ENCODE measurements at regions of chr19 and their contacts with region 1.

Region 1: DNA sequence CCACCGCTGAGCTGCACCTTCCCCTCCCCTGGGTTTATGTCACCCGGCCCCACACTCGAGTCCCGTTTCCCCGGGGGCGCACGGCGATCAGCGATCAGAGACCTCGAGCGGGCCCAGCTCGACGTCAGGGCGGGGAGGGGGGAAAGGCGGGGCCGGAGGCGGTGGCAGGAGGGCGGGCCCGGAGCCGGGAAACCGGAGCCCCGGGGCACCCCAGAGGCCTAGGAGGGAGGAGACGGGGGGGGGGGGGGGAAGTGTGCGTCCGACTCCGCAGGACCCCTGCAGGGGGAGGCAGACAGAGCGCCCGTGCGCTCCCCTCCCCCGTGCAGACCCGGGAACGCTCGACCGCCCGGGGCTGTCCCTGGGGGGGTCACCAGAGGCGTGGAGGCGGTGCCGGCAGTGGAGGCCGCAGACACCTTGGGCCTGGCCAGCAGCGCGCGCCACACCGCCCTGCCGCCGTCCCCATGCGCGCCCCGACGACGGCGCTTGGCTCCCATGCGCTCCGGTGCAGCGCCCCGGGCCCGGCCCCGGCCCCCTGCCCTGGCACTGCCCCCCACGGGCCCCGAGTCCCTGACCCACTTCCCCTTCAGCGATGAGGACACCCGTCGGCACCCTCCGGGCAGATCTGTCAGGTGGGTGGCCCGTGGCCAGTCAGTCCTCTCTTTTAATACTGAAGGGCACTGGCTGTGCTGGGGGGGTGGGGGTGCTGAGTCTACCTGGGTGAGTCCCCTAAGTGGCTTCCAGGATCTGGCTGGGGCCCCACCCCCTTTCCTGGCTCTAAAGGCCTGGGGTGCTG is 11.8 kb downstream of the PDE4A start:
- DNase-seq: peak in 1 of 2 experiments; percentile 63
- H3K4me3 ChIP-seq: peak overlapping the region in 2 of 4 experiments; percentile 29 to 54; a peak in 5 of 8 replicates
- H3K27ac ChIP-seq: no peak overlapping the region
- H3K4me1 ChIP-seq: peaks cover 0 to 9% (median 6%) of the 10 kb centered on the region in 4 experiments; a peak in 6 of 7 replicates
- H3K27me3 ChIP-seq: peaks cover 33 to 63% (median 52%) of the 10 kb centered on the region in 4 experiments
- CTCF ChIP-seq: no peak
- EP300 ChIP-seq: no peak
- POLR2A ChIP-seq: no peak
- RAD21 ChIP-seq: no peak

Region 2: GRCh38 chr19:10346509-10346908 is 85.6 kb before region 1 on chr19:
- CTCF ChIA-PET with region 1: no interaction called
- POLR2A ChIA-PET with region 1: no interaction called
- DNase-seq: no peak
- H3K4me3 ChIP-seq: no peak overlapping the region
- H3K27ac ChIP-seq: no peak overlapping the region
- H3K4me1 ChIP-seq: no peaks in the 10 kb centered on the region
- H3K27me3 ChIP-seq: no peaks in the 10 kb centered on the region
- CTCF ChIP-seq: no peak
- EP300 ChIP-seq: no peak
- POLR2A ChIP-seq: no peak
- RAD21 ChIP-seq: no peak

Region 3: GRCh38 chr19:10363789-10364281 is 68.3 kb before region 1 on chr19:
- CTCF ChIA-PET with region 1: no interaction called
- POLR2A ChIA-PET with region 1: no interaction called
- DNase-seq: no peak
- H3K4me3 ChIP-seq: no peak overlapping the region
- H3K27ac ChIP-seq: no peak overlapping the region
- H3K4me1 ChIP-seq: no peaks in the 10 kb centered on the region
- H3K27me3 ChIP-seq: no peaks in the 10 kb centered on the region
- CTCF ChIP-seq: no peak
- EP300 ChIP-seq: no peak
- POLR2A ChIP-seq: no peak
- RAD21 ChIP-seq: no peak

Region 4: DNA sequence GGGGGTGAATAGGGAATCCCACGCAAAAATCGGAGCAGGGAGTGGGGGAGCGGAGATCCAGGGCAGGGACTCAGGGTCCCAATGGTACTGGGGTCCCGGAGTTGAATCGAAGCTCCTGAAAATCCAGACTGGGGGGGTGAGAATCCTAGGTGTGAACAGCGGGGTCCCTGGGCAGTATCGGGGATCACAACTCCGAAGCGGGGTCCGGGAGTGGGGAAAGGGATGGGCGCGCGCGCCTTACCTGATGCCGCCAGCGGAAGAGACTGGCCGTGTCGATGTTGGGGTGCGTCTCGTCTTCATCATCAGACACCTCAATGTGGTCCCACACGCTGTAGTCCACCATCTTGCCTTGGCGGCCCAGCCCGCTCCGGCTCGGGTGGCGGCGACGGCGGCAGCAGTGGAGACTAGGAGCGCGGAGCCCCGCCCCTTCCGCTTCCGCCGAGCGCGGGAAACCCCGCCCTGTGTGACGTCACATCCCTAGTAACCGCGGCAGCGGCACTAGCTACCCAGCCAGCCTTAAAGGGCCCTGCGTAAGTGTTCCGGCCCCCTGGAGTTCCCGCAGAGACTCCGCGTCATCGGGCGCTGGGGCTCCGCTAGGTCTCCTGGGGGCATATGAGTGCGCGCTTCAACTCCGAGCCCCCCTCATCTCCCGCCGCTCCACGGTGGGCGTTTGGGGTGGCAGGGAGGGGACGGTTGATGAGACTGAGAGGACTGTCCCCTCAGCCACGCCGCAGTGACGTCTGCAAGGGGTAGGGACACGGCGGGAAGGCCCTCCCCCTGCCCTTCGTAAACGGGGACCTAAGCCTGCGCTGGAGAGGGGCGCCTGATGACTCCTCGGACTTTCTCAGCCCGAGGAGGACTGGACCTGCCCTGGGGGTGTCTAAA is 28.8 kb before region 1 on chr19 and contains the start of gene CDC37:
- CTCF ChIA-PET with region 1: interaction called, 27 read pairs
- POLR2A ChIA-PET with region 1: interaction called, 4 read pairs
- DNase-seq: peak; percentile 86 to 99
- H3K4me3 ChIP-seq: peak within 1 kb of the TSS; percentile 71 to 98 (median 98)
- H3K27ac ChIP-seq: peak within 1 kb of the TSS; percentile 78
- H3K4me1 ChIP-seq: peaks cover 3 to 8% (median 5%) of the 10 kb centered on the region in 4 experiments; a peak in 5 of 7 replicates
- H3K27me3 ChIP-seq: peaks cover 3 to 15% (median 9%) of the 10 kb centered on the region in 4 experiments; a peak in 5 of 7 replicates
- CTCF ChIP-seq: peak in 2 of 3 experiments; percentile 0 to 10; a peak in 2 of 4 replicates
- EP300 ChIP-seq: no peak
- POLR2A ChIP-seq: peak in 1 of 2 experiments; percentile 95; a peak in 2 of 3 replicates
- RAD21 ChIP-seq: no peak
- total RNA-seq, gene CDC37: 162 and 164 TPM in 2 replicates

Region 5: GRCh38 chr19:10416380-10417257 is 15.5 kb before region 1 on chr19:
- CTCF ChIA-PET with region 1: interaction called, 67 read pairs
- POLR2A ChIA-PET with region 1: interaction called, 3 read pairs
- DNase-seq: peak; percentile 83 to 100
- H3K4me3 ChIP-seq: peak overlapping the region; percentile 42 to 66 (median 54)
- H3K27ac ChIP-seq: no peak overlapping the region
- H3K4me1 ChIP-seq: peaks cover 5 to 26% (median 13%) of the 10 kb centered on the region in 4 experiments
- H3K27me3 ChIP-seq: peaks cover 25 to 62% (median 52%) of the 10 kb centered on the region in 4 experiments
- CTCF ChIP-seq: peak; percentile 69 to 79 (median 78)
- EP300 ChIP-seq: peak in 1 of 2 experiments; percentile 85; a peak in 1 of 3 replicates
- POLR2A ChIP-seq: no peak
- RAD21 ChIP-seq: peak; percentile 28 to 30; a peak in 3 of 4 replicates

Region 6: GRCh38 chr19:10450853-10451609 is 18.9 kb after region 1 on chr19:
- CTCF ChIA-PET with region 1: interaction called, 36 read pairs
- POLR2A ChIA-PET with region 1: interaction called, 4 read pairs
- DNase-seq: peak; percentile 31 to 81
- H3K4me3 ChIP-seq: no peak overlapping the region
- H3K27ac ChIP-seq: no peak overlapping the region
- H3K4me1 ChIP-seq: peaks cover 0 to 17% (median 7%) of the 10 kb centered on the region in 4 experiments; a peak in 4 of 7 replicates
- H3K27me3 ChIP-seq: 0 out of 7 replicates have a peak, but pooled peaks cover 0 to 1% (median 0%) of the 10 kb centered on the region in 4 experiments
- CTCF ChIP-seq: no peak
- EP300 ChIP-seq: no peak
- POLR2A ChIP-seq: no peak
- RAD21 ChIP-seq: no peak

Region 7: GRCh38 chr19:10461047-10461790 is 29.1 kb after region 1 on chr19:
- CTCF ChIA-PET with region 1: interaction called, 13 read pairs
- POLR2A ChIA-PET with region 1: no interaction called
- DNase-seq: peak; percentile 90 to 100
- H3K4me3 ChIP-seq: peak overlapping the region; percentile 62 to 78 (median 72)
- H3K27ac ChIP-seq: peak overlapping the region; percentile 66; the same call in 1 of the 2 replicates
- H3K4me1 ChIP-seq: peaks cover 0 to 7% (median 2%) of the 10 kb centered on the region in 4 experiments; a peak in 6 of 7 replicates
- H3K27me3 ChIP-seq: peaks cover 0 to 5% (median 2%) of the 10 kb centered on the region in 4 experiments; a peak in 4 of 7 replicates
- CTCF ChIP-seq: no peak
- EP300 ChIP-seq: no peak
- POLR2A ChIP-seq: peak in 1 of 2 experiments; percentile 53; a peak in 1 of 3 replicates
- RAD21 ChIP-seq: no peak

Region 8: DNA sequence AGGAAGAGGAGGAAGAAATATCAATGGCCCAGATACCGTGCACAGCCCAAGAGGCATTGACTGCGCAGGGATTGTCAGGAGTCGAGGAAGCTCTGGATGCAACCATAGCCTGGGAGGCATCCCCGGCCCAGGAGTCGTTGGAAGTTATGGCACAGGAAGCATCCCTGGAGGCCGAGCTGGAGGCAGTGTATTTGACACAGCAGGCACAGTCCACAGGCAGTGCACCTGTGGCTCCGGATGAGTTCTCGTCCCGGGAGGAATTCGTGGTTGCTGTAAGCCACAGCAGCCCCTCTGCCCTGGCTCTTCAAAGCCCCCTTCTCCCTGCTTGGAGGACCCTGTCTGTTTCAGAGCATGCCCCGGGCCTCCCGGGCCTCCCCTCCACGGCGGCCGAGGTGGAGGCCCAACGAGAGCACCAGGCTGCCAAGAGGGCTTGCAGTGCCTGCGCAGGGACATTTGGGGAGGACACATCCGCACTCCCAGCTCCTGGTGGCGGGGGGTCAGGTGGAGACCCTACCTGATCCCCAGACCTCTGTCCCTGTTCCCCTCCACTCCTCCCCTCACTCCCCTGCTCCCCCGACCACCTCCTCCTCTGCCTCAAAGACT is 35.1 kb after region 1 on chr19:
- CTCF ChIA-PET with region 1: interaction called, 12 read pairs
- POLR2A ChIA-PET with region 1: no interaction called
- DNase-seq: no peak
- H3K4me3 ChIP-seq: no peak overlapping the region; a peak in 1 of 8 replicates
- H3K27ac ChIP-seq: no peak overlapping the region
- H3K4me1 ChIP-seq: peaks cover 0 to 16% (median 10%) of the 10 kb centered on the region in 4 experiments; a peak in 6 of 7 replicates
- H3K27me3 ChIP-seq: peaks cover 0 to 5% (median 0%) of the 10 kb centered on the region in 4 experiments; a peak in 2 of 7 replicates
- CTCF ChIP-seq: no peak
- EP300 ChIP-seq: no peak
- POLR2A ChIP-seq: no peak
- RAD21 ChIP-seq: no peak